Posterior vena cava (tissue), 2 donors: ENCODE measurements at regions of chr20 and their contacts with region 1.

Region 1: DNA sequence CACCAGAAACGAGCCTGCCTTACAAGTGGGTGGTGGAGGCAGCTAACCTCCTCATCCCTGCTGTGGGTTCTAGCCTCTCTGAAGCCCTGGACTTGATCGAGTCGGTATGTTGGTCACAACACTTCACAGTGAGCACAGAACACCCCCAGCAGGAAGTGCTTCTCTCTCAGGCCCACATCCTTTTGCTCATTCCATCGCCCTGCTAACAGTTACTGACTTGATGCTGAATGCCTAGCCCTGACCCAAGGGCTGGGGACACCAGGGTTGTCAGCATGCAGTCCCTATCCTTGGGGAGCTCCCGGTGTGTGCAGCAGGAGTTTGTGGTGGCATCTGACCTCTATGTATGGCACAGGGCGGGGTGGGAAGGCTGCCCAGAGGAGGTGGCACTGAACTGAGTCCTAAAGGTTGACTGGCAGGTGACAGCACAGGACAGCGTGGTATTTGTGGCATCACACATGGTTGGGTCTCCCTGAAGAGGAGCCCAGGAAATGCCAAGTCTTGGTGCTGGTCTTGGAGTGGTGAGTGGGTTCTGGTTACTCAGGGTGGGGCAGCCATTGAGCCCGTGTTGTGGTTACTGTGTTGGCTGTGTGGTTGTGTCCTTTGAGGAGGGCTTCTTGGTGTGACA is 26.7 kb downstream of the GTSF1L start:
- DNase-seq: no peak

Region 2: GRCh38 chr20:43631598-43631997 is 68.5 kb before region 1 on chr20:
- intact Hi-C with region 1: no loop called
- DNase-seq: no peak

Region 3: GRCh38 chr20:43740642-43741041 is 40.6 kb after region 1 on chr20:
- intact Hi-C with region 1: loop called in 1 of 2 experiments (anchors 2 kb)
- DNase-seq: no peak